A549 (cell line): ENCODE measurements at regions of chr3 and their contacts with region 1.

Region 1: DNA sequence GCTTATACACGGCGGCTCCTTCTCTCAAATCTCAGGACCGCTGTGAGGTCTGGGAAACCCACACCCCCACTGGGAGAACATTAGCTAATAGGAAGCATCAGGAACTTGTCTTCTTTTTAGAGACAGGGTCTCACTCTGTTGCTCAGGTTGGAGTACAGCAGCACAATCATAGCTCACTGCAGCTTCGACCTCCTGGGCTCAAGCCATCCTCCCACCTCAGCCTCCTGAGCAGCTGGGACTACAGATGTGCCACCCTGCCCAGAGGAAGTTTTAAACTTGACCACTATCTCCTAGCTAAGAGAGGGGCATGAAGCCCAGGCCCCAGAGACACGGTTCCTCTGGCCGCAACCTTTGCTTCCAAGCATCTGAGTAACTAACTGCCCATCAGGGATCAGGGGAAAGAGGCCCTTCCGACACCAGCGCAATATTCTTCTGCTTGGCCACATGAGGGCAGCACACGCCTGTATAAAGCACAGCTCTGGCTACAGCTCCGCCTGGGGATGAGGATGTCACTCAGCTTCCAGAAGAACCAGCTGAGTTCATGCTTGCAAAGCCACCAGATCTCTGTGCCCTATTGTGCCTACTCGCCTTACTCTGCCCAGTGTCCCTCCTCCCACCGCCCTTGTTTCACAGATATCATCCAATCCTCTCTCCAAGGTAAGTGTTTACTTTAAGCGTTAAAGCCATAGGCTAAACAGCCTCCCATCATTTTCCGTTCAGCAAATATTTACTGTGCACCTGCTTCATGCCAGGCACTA is 57.5 kb upstream of the SLC6A11 start:
- DNase-seq: peak; percentile 74 to 87
- ATAC-seq: peak; percentile 86 to 99
- H3K4me3 ChIP-seq: no peak overlapping the region
- H3K27ac ChIP-seq: no peak overlapping the region
- H3K4me1 ChIP-seq: no peaks in the 10 kb centered on the region
- CTCF ChIP-seq: peak; percentile 81
- EP300 ChIP-seq: no peak
- POLR2A ChIP-seq: no peak
- RAD21 ChIP-seq: peak; percentile 90 to 96

Region 2: GRCh38 chr3:10738688-10739372 is 19.7 kb before region 1 on chr3:
- CTCF ChIA-PET with region 1: interaction called, 62 read pairs
- POLR2A ChIA-PET with region 1: no interaction called
- DNase-seq: peak; percentile 61 to 77
- ATAC-seq: peak; percentile 91 to 96
- H3K4me3 ChIP-seq: peak overlapping the region; percentile 30
- H3K27ac ChIP-seq: peak overlapping the region in 1 of 2 experiments; percentile 65; a peak in 2 of 6 replicates
- H3K4me1 ChIP-seq: no peaks in the 10 kb centered on the region
- CTCF ChIP-seq: peak; percentile 89
- EP300 ChIP-seq: no peak
- POLR2A ChIP-seq: no peak
- RAD21 ChIP-seq: peak; percentile 68 to 76

Region 3: GRCh38 chr3:10772271-10773161 is 14.0 kb after region 1 on chr3:
- CTCF ChIA-PET with region 1: interaction called, 129 read pairs
- POLR2A ChIA-PET with region 1: no interaction called
- DNase-seq: peak; percentile 37 to 43
- ATAC-seq: peak; percentile 75 to 91
- H3K4me3 ChIP-seq: no peak overlapping the region
- H3K27ac ChIP-seq: no peak overlapping the region
- H3K4me1 ChIP-seq: no peaks in the 10 kb centered on the region
- CTCF ChIP-seq: peak; percentile 59
- EP300 ChIP-seq: no peak
- POLR2A ChIP-seq: no peak
- RAD21 ChIP-seq: peak in 1 of 2 experiments; percentile 21; a peak in 1 of 5 replicates

Region 4: DNA sequence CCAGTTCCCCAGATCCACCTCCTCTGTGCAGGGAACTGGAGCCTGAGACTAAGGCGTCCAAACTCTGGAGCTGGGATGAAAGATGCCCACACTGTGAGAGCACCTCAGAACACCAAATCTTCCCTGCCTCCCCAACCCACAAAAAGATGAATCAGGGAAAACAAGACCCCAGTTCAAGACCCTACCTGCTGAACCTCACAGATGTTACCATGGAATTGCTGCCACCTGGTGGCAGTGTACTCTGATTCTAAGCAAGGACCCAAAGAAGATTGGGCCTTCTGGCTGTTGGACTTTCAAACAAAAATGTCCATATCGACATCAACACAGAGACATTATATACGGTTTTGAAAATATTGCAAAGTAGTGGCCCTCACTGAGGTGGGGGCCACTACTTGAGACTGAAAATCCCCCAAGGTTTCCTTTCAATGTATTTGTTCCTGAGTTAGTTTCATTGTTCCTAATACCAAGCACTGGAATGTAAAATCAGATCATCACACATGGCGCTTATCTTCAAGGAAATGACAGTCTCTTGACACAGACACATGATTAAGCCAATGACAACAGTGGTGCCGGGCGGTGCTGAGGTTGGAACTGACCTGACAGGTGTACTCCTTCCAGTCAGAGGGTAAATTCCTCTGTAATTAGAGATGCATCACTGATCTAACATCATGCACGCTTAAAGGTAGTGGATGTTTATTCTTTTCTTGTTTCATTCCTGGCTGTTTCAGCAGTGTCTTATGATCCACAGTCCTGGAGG is 125.2 kb after region 1 on chr3:
- CTCF ChIA-PET with region 1: interaction called, 94 read pairs
- POLR2A ChIA-PET with region 1: no interaction called
- DNase-seq: peak; percentile 18 to 31
- ATAC-seq: peak in 1 of 2 experiments; percentile 74; a peak in 3 of 6 replicates
- H3K4me3 ChIP-seq: no peak overlapping the region
- H3K27ac ChIP-seq: no peak overlapping the region
- H3K4me1 ChIP-seq: no peaks in the 10 kb centered on the region
- CTCF ChIP-seq: peak; percentile 68
- EP300 ChIP-seq: no peak
- POLR2A ChIP-seq: no peak
- RAD21 ChIP-seq: peak; percentile 56 to 58

Region 5: GRCh38 chr3:10983219-10983916 is 224.9 kb after region 1 on chr3:
- CTCF ChIA-PET with region 1: interaction called, 38 read pairs
- POLR2A ChIA-PET with region 1: no interaction called
- DNase-seq: peak; percentile 37 to 87
- ATAC-seq: peak; percentile 83 to 94
- H3K4me3 ChIP-seq: no peak overlapping the region
- H3K27ac ChIP-seq: no peak overlapping the region
- H3K4me1 ChIP-seq: peaks cover 4% of the 10 kb centered on the region; the same call in 2 of the 3 replicates
- CTCF ChIP-seq: peak; percentile 74
- EP300 ChIP-seq: no peak
- POLR2A ChIP-seq: no peak
- RAD21 ChIP-seq: peak; percentile 35 to 50; a peak in 4 of 5 replicates